Naive thymus-derived CD4-positive, alpha-beta T cell (primary cell): ENCODE measurements at regions of chr22 and their contacts with region 1.

Region 1: DNA sequence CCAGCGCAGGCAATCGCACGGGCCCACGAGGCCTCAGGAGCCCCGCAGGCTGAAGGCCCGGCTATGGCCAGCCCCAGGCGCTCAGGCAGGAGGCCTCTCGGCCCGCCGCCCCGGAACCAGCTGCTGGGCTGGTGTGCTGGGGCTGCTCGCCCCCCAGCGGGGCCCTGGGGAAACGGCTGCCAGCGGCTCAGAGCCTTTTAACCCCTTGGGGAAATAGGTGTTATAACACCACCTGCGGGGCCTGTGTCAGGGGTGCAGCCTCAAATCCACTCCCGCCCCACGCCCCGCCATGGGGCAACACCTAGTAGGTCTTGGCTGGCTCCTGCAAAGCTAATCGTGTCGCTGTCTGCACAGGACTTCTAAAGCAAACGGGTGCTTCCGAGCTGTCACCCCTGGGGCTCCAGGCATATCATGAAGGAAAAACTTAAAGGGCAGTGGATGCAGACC is 237.4 kb downstream of the TTC28 start:
- DNase-seq: peak; percentile 54 to 79 (median 77)
- ATAC-seq: peak; percentile 91
- H3K4me3 ChIP-seq: peak overlapping the region; percentile 72
- H3K4me3 Mint-ChIP-seq: peak overlapping the region; percentile 88 to 97 (median 94)
- H3K27ac ChIP-seq: peak overlapping the region; percentile 58
- H3K27ac Mint-ChIP-seq: peak overlapping the region; percentile 66 to 90 (median 84)
- H3K4me1 ChIP-seq: peaks cover 0 to 15% of the 10 kb centered on the region in 2 donors
- H3K4me1 Mint-ChIP-seq: peaks cover 10 to 27% (median 24%) of the 10 kb centered on the region in 7 donors
- H3K27me3 ChIP-seq: peaks cover 0 to 4% of the 10 kb centered on the region in 2 donors
- H3K27me3 Mint-ChIP-seq: peaks cover 0 to 26% (median 0%) of the 10 kb centered on the region in 5 donors

Region 2: DNA sequence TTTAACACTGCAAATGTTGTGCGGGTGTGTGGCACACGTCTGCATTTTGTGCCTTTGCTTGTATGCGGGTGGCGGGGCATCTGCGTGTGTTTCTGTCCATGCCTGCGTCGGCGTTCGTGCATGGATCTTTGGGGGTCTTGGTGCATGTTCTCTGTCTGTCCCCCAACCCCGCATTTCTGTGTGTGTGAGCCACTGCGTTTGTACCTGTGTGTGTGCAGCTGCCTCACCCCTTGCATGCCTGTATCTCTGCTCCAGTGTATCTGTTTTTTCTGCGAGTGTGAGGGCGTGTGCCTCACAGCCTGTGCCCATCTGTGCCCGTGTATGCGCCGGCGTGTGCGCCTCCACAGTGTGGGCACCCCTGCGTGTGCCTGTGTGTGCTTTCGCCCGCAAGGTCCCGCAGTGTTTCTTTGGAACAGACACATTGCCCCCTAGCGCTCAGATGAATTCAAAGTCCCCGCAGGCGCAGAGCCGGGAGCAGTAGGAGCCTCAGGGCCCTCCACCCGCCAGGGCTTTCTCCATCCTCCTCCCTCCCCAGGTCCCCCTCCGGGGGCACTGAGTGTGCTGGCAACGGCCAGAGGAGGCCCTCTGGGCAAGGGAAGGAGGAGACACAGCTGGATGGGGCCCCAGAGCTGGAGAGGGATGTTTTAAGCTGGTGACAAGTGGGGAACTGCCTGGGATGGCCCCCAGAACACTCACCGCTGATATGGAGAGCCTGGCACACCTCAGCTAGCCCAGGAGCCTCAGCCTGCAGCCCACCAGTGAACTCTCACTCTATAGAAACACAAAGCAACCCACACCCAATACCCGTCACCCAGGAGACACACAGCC is 637.6 kb before region 1 on chr22:
- CTCF ChIA-PET with region 1: no interaction called
- POLR2A ChIA-PET with region 1: no interaction called
- intact Hi-C with region 1: loop called in 1 of 2 experiments (anchors 2 kb)
- DNase-seq: peak in 8 of 9 donors; percentile 19 to 56 (median 48)
- ATAC-seq: peak; percentile 53
- H3K4me3 ChIP-seq: no peak overlapping the region
- H3K4me3 Mint-ChIP-seq: peak overlapping the region in 9 of 10 donors; percentile 9 to 86 (median 59)
- H3K27ac ChIP-seq: no peak overlapping the region
- H3K27ac Mint-ChIP-seq: no peak overlapping the region
- H3K4me1 ChIP-seq: peaks cover 8 to 18% of the 10 kb centered on the region in 2 donors
- H3K4me1 Mint-ChIP-seq: peaks cover 13 to 31% (median 15%) of the 10 kb centered on the region in 7 donors
- H3K27me3 ChIP-seq: no peaks in the 10 kb centered on the region
- H3K27me3 Mint-ChIP-seq: peaks cover 11 to 45% (median 33%) of the 10 kb centered on the region in 5 donors

Region 3: DNA sequence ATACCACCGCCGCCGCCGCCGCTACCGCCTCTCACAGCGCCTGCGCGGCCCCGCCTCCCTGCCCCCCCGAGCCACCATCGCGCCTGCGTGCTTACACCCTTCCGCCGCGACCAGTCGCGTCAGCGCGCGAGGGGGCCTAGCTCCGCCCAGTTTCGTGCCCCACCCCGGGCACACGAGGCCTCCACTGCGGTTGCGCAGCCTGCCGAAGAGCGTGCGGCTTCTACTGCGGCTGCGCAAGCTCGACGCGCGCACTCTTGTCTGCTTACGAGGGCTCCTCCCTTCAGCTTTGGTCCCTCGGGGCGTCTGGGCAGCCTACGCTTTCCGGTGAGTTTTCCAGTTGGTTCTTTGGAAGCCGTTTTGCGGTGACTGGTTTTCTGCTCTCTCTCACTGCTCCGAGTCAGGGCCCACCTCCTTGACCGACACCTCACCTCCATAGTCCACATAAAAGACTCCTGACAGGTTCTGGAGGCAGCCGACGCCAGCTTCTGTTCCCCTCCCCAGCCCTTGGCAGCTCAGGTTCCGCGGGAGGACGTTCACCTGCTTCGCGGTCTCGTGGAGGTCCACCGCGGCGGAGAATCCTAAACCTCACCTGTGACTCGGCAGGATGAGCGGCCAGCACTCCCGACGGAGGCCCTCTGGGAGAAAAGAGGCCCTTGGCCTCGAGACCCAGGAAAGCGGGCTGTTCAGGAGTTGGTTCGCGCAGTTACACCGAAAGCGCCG is 522.9 kb before region 1 on chr22 and contains the start of gene PITPNB:
- CTCF ChIA-PET with region 1: no interaction called
- POLR2A ChIA-PET with region 1: no interaction called
- intact Hi-C with region 1: loop called in 1 of 2 experiments (anchors 5 kb)
- DNase-seq: peak; percentile 97 to 100 (median 99)
- ATAC-seq: peak; percentile 95
- H3K4me3 ChIP-seq: peak within 1 kb of the TSS; percentile 84
- H3K4me3 Mint-ChIP-seq: peak within 1 kb of the TSS; percentile 97 to 100 (median 99)
- H3K27ac ChIP-seq: peak within 1 kb of the TSS; percentile 94
- H3K27ac Mint-ChIP-seq: peak within 1 kb of the TSS; percentile 93 to 99 (median 99)
- H3K4me1 ChIP-seq: peaks cover 29 to 32% of the 10 kb centered on the region in 2 donors
- H3K4me1 Mint-ChIP-seq: peaks cover 56 to 85% (median 75%) of the 10 kb centered on the region in 7 donors
- H3K27me3 ChIP-seq: no peaks in the 10 kb centered on the region
- H3K27me3 Mint-ChIP-seq: peaks cover 0 to 4% (median 0%) of the 10 kb centered on the region in 5 donors
- total RNA-seq, gene PITPNB: 56.3 to 98.8 (median 62.8) TPM

Region 4: DNA sequence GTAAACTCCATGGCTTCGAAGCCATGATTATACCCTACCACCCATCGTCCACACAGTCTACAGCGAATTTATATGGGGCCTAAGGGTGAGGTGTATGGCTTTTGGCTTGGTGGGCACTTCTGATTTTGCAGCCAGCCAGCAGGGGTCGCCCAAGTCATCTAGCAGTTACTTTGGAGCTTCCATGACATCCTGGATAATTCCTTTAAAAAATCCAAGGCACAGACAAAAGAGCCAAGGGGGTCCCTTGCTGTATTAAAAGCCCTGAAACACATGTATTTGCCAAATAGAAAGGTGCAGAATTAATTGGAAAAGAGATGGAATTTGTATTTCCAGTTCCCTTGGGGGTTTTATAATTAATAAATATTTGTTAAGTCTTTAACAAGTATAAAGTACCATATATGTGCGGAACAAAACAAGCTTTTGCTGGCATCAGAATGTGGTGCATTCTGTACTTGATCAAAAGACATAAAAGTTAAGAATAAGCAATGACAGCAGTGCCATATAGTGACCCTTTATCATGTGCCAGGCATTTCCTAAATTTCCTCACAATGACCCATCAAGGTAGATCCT is 390.4 kb before region 1 on chr22:
- CTCF ChIA-PET with region 1: no interaction called
- POLR2A ChIA-PET with region 1: no interaction called
- intact Hi-C with region 1: loop called (anchors 1 kb)
- DNase-seq: peak in 5 of 9 donors; percentile 4 to 19 (median 11)
- ATAC-seq: no peak
- H3K4me3 ChIP-seq: no peak overlapping the region
- H3K4me3 Mint-ChIP-seq: no peak overlapping the region
- H3K27ac ChIP-seq: no peak overlapping the region
- H3K27ac Mint-ChIP-seq: no peak overlapping the region
- H3K4me1 ChIP-seq: no peaks in the 10 kb centered on the region
- H3K4me1 Mint-ChIP-seq: peaks cover 0 to 2% (median 0%) of the 10 kb centered on the region in 7 donors
- H3K27me3 ChIP-seq: no peaks in the 10 kb centered on the region
- H3K27me3 Mint-ChIP-seq: peaks cover 0 to 5% (median 0%) of the 10 kb centered on the region in 5 donors

Region 5: DNA sequence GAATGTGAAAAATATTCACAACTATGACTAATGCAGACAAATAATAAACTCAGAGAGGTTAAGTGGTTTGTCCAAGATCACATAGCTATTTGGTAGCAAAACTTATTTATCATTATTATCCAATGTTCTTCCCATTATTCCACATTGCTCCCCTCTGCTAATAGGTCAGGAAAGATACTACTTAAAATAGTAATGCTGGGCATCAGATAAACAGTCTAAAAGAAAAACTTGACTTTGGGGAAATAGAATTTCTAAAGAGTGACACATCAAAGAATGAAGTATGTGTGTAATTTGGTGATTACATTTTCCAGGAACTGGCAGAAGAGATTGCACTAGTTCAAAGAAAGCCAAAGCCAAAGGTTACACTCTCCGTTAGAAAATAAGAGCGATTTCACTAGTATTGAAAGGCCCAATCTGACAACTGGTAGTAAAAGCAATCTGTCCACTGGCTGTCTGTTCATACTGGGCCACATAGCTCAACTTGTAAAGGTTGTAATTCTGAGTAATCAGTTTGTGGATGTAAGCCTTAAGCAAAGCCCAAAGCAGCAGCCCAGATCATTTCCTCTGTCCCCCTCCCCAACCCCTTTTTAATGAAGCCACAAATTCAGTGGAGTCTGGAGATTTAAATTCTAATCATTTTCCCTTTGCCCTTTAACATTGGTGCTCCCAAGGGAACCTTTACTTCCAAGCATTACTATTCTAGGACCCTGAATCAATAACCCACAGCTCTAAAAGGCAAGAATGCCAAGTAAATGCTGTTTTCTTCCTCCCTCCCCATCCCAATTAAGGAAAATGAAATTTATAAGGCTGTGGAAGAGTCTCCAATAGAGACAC is 46.1 kb before region 1 on chr22:
- CTCF ChIA-PET with region 1: no interaction called
- POLR2A ChIA-PET with region 1: no interaction called
- intact Hi-C with region 1: loop called in 1 of 2 experiments (anchors 10 kb)
- DNase-seq: no peak
- ATAC-seq: peak; percentile 24
- H3K4me3 ChIP-seq: no peak overlapping the region
- H3K4me3 Mint-ChIP-seq: peak overlapping the region in 1 of 10 donors; percentile 74
- H3K27ac ChIP-seq: no peak overlapping the region
- H3K27ac Mint-ChIP-seq: peak overlapping the region in 1 of 9 donors; percentile 76
- H3K4me1 ChIP-seq: no peaks in the 10 kb centered on the region
- H3K4me1 Mint-ChIP-seq: peaks cover 0 to 46% (median 6%) of the 10 kb centered on the region in 7 donors
- H3K27me3 ChIP-seq: no peaks in the 10 kb centered on the region
- H3K27me3 Mint-ChIP-seq: peaks cover 0 to 14% (median 0%) of the 10 kb centered on the region in 5 donors

Region 6: GRCh38 chr22:28570691-28571373 is 128.5 kb after region 1 on chr22:
- CTCF ChIA-PET with region 1: no interaction called
- POLR2A ChIA-PET with region 1: no interaction called
- intact Hi-C with region 1: no loop called
- DNase-seq: no peak
- ATAC-seq: no peak
- H3K4me3 ChIP-seq: no peak overlapping the region
- H3K4me3 Mint-ChIP-seq: no peak overlapping the region
- H3K27ac ChIP-seq: no peak overlapping the region
- H3K27ac Mint-ChIP-seq: no peak overlapping the region
- H3K4me1 ChIP-seq: no peaks in the 10 kb centered on the region
- H3K4me1 Mint-ChIP-seq: no peaks in the 10 kb centered on the region
- H3K27me3 ChIP-seq: no peaks in the 10 kb centered on the region
- H3K27me3 Mint-ChIP-seq: peaks cover 15 to 46% (median 32%) of the 10 kb centered on the region in 5 donors

Region 7: GRCh38 chr22:28882878-28883656 is 440.8 kb after region 1 on chr22 and contains the start of gene ZNRF3:
- CTCF ChIA-PET with region 1: no interaction called
- POLR2A ChIA-PET with region 1: no interaction called
- intact Hi-C with region 1: loop called in 1 of 2 experiments (anchors 10 kb)
- DNase-seq: peak; percentile 76 to 91 (median 87)
- ATAC-seq: peak; percentile 98
- H3K4me3 ChIP-seq: peak within 1 kb of the TSS; percentile 90
- H3K4me3 Mint-ChIP-seq: peak within 1 kb of the TSS; percentile 66 to 94 (median 88)
- H3K27ac ChIP-seq: peak within 1 kb of the TSS; percentile 15
- H3K27ac Mint-ChIP-seq: peak within 1 kb of the TSS; percentile 33 to 78 (median 62)
- H3K4me1 ChIP-seq: peaks cover 8 to 12% of the 10 kb centered on the region in 2 donors
- H3K4me1 Mint-ChIP-seq: peaks cover 13 to 29% (median 21%) of the 10 kb centered on the region in 7 donors
- H3K27me3 ChIP-seq: peaks cover 0 to 3% of the 10 kb centered on the region in 2 donors
- H3K27me3 Mint-ChIP-seq: peaks cover 8 to 72% (median 16%) of the 10 kb centered on the region in 5 donors
- total RNA-seq, gene ZNRF3: 0.59 to 0.98 (median 0.70) TPM